PC-9 (cell line): ENCODE measurements at regions of chr11 and their contacts with region 1.

Region 1: DNA sequence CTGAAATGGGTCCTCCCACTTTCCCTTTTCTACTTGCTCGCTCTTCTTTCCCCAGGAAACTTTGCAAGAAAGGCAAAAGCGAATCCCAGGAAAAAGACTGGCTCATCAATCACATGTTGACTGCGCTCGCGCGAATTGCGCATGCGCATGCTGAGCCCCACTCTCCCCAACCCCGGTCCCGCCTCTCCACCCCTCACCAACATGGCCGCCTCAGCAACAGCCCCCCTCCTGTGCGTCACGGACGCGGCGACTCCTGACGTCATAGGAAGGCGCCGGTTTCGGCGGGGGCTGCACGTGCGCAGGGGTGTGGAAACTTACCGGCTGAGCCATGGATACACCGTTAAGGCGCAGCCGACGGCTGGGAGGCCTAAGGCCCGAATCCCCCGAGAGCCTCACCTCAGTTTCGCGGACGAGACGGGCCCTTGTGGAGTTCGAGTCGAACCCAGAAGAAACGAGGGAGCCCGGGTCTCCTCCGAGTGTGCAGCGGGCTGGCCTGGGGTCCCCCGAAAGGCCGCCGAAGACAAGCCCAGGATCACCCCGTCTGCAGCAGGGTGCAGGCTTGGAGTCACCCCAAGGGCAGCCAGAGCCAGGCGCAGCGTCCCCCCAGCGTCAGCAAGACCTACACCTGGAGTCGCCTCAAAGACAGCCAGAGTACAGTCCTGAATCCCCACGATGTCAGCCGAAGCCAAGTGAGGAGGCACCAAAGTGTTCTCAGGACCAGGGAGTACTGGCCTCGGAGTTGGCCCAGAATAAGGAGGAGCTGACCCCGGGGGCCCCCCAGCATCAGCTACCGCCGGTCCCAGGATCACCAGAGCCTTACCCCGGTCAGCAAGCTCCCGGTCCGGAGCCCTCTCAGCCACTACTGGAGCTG is at the start of gene CCDC86:
- DNase-seq: peak; percentile 83 to 96
- H3K4me3 ChIP-seq: peak within 1 kb of the TSS; percentile 91
- H3K27ac ChIP-seq: peak within 1 kb of the TSS; percentile 52
- H3K4me1 ChIP-seq: peaks cover 18% of the 10 kb centered on the region
- H3K27me3 ChIP-seq: no peaks in the 10 kb centered on the region
- CTCF ChIP-seq: no peak
- total RNA-seq, gene CCDC86: 34.8 and 35.6 TPM in 2 replicates

Region 2: DNA sequence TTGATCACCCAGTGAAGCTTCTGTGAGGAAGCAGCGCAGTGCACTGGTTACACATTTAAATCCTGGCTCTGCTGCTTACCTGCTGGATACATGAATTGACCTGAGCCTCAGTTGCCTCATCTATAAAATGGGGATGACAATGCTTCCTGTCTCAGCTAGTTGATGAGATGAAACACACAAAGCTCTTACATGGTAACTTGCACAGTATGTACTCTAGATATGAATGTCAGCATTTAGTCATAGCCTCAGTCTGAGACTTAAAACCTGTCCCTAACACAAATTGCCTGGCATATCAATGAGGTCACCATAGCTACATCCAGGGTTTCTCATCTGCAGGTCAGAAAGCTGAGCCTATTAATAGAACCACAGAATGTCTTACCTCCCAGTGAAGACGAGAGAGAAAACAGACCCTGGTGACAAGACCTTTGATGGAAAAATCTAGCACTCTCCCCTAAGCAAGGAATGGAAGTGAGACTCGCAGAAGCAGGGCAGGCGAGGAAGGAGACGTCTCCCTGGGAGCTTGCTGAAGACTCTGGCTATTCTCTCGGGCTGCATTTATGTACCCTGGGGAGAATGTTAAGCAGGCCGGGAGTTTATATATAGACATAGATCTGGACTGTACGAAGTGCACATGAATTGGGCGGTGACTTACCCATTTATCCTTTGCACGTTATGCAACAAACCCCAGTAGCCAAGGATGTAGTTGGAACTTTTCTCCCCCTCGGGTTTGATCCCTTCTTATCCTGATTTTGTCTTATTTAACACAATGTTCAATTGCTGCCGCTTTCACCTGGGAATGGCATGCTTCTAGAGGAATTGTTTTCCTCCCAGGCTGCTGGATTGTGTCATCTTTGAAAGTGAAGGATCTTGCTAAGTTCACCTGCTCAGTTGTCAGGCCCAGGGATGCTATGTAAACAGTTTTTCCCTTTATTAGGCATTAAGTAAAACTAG is 605.8 kb after region 1 on chr11:
- CTCF ChIA-PET with region 1: no interaction called
- POLR2A ChIA-PET with region 1: no interaction called
- intact Hi-C with region 1: no loop called
- DNase-seq: no peak
- H3K4me3 ChIP-seq: no peak overlapping the region
- H3K27ac ChIP-seq: no peak overlapping the region
- H3K4me1 ChIP-seq: no peaks in the 10 kb centered on the region
- H3K27me3 ChIP-seq: no peaks in the 10 kb centered on the region
- CTCF ChIP-seq: no peak

Region 3: DNA sequence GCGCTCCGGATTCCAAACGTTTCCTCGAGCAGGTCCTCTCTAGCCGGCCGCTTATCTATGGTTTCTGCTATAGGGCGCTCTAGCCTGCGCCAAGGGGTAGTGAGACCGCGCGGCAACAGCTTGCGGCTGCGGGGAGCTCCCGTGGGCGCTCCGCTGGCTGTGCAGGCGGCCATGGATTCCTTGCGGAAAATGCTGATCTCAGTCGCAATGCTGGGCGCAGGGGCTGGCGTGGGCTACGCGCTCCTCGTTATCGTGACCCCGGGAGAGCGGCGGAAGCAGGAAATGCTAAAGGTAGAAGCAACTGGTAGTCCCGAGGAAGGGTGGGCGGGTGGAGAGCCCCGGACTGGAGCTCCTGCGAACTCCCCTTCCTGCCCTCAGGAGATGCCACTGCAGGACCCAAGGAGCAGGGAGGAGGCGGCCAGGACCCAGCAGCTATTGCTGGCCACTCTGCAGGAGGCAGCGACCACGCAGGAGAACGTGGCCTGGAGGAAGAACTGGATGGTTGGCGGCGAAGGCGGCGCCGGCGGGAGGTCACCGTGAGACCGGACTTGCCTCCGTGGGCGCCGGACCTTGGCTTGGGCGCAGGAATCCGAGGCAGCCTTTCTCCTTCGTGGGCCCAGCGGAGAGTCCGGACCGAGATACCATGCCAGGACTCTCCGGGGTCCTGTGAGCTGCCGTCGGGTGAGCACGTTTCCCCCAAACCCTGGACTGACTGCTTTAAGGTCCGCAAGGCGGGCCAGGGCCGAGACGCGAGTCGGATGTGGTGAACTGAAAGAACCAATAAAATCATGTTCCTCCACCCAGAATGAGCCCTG is 1829.8 kb after region 1 on chr11 and contains the starts of genes LBHD1 and UQCC3:
- CTCF ChIA-PET with region 1: no interaction called
- POLR2A ChIA-PET with region 1: interaction called, 12 read pairs
- intact Hi-C with region 1: no loop called
- DNase-seq: peak; percentile 75 to 80
- H3K4me3 ChIP-seq: peak within 1 kb of the TSS; percentile 79
- H3K27ac ChIP-seq: peak within 1 kb of the TSS; percentile 79
- H3K4me1 ChIP-seq: peaks cover 46% of the 10 kb centered on the region
- H3K27me3 ChIP-seq: no peaks in the 10 kb centered on the region
- CTCF ChIP-seq: no peak
- total RNA-seq, gene LBHD1: 13.2 and 16.1 TPM in 2 replicates
- total RNA-seq, gene UQCC3: 16.1 and 25.4 TPM in 2 replicates